ENCODE measurements at regions of chr10 and their contacts with region 1.

Region 1: GRCh38 chr10:61779950-61780659 is 117.4 kb downstream of the CABCOCO1 start:
- DNase-seq: peak; percentile 83
- ATAC-seq: peak; percentile 85
- H3K4me3 ChIP-seq: no peak overlapping the region
- H3K27ac ChIP-seq: no peak overlapping the region
- H3K4me1 ChIP-seq: peaks cover 24% of the 10 kb centered on the region
- H3K27me3 ChIP-seq: no peaks in the 10 kb centered on the region
- CTCF ChIP-seq: no peak

Region 2: GRCh38 chr10:61708846-61709245 is 71.3 kb before region 1 on chr10:
- CTCF ChIA-PET with region 1: no interaction called
- POLR2A ChIA-PET with region 1: no interaction called
- intact Hi-C with region 1: no loop called
- DNase-seq: no peak
- ATAC-seq: no peak
- H3K4me3 ChIP-seq: no peak overlapping the region
- H3K27ac ChIP-seq: no peak overlapping the region
- H3K4me1 ChIP-seq: no peaks in the 10 kb centered on the region
- H3K27me3 ChIP-seq: 0 out of 2 replicates have a peak, but pooled peaks cover 6% of the 10 kb centered on the region
- CTCF ChIP-seq: no peak

Region 3: DNA sequence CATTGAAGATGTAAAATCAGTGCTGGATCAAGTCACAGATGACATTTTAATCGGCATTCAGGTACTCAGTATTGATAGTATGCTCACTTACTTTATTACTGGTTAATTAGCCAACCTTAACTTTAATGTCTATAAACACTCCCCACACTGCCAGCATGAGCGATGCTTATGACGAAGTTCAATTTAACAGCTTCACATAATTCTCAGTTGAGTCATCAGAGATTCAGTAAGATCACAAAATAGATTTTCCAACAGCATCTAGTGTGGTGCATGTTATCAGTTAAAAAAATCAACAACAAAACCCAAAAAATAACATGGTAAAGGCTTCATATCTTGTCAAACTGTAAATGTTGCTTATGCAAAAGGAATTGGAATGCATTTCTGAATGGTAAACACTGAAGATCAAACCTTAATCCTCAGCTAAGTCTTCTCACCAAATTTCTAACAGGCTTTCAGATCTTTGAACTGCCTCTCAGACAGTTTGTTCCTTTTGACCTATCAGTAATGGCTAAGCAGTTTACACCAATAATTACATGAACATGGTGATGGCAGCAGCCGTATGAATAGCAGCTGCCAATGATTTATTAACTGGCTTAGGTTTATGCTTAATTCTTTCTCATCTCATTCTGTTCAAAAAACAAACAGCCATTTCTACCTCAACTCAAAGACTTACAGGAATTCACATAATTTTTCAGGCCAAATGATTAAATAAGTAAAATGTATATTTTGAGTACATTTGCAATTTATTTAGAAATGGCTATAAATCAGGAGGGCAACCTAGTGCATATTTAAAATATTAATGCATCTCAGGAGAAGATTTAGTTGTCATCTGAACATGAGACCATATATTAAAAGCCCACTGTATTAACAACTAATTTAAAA is 18.9 kb before region 1 on chr10:
- CTCF ChIA-PET with region 1: no interaction called
- POLR2A ChIA-PET with region 1: interaction called, 3 read pairs
- intact Hi-C with region 1: loop called (anchors 1 kb)
- DNase-seq: peak; percentile 99
- ATAC-seq: peak; percentile 66
- H3K4me3 ChIP-seq: peak overlapping the region; percentile 4; the same call in 1 of the 2 replicates
- H3K27ac ChIP-seq: peak overlapping the region; percentile 77
- H3K4me1 ChIP-seq: peaks cover 53% of the 10 kb centered on the region
- H3K27me3 ChIP-seq: no peaks in the 10 kb centered on the region
- CTCF ChIP-seq: no peak

Region 4: DNA sequence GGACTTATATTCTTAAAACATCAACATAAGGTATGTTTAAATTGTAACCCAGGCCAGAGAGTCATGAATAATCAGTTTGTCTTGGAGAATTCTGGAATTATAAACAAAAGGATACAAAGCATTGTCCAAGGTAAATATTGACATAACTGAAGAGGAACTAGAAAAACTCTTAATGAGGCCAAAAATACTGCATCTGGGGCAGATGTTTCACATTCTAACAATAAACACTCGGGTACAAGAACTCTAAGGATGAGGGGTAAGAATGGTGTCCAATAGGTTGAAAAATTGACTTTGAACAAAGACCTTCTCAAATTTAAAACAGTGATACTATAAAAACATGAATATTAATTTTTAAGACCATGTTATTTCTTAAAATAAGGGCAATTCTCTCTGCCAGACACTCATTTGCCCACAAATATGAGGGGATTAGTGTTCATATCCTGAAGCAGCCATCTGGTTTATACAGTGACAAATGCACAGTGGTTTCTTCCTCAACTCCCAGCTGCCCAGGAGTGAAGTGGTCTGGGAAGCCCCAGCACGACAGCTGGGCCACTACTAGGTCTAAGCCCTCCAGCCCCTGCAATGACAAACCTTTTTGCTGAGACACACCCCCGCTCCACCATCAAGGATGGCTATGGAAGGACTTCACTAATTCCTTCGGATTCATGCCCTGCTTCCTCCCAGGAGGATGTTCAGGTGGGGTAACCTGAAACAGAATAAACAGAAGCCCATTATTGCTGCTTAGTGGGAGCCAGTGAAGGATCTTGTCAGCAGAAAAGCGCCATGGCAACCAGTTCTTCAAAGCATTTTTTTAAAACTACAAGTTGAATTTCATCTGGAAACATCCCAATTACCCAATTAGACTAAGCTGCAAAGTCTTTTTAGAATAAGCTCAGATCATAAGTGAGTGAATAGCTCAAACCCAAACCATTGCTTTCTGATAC is 13.9 kb after region 1 on chr10:
- CTCF ChIA-PET with region 1: no interaction called
- POLR2A ChIA-PET with region 1: no interaction called
- intact Hi-C with region 1: loop called (anchors 1 kb)
- DNase-seq: peak; percentile 72
- ATAC-seq: peak; percentile 82
- H3K4me3 ChIP-seq: no peak overlapping the region
- H3K27ac ChIP-seq: no peak overlapping the region
- H3K4me1 ChIP-seq: peaks cover 23% of the 10 kb centered on the region
- H3K27me3 ChIP-seq: no peaks in the 10 kb centered on the region
- CTCF ChIP-seq: no peak

Region 5: GRCh38 chr10:63588436-63589167 is 1808.5 kb after region 1 on chr10:
- CTCF ChIA-PET with region 1: no interaction called
- POLR2A ChIA-PET with region 1: no interaction called
- intact Hi-C with region 1: no loop called
- DNase-seq: peak; percentile 93
- ATAC-seq: peak; percentile 79
- H3K4me3 ChIP-seq: peak overlapping the region; percentile 2; the same call in 1 of the 2 replicates
- H3K27ac ChIP-seq: peak overlapping the region; percentile 44
- H3K4me1 ChIP-seq: peaks cover 31% of the 10 kb centered on the region
- H3K27me3 ChIP-seq: no peaks in the 10 kb centered on the region
- CTCF ChIP-seq: no peak

Measured in PC-3 (cell line).